ENCODE measurements at regions of chr9 and their contacts with region 1.

Region 1: DNA sequence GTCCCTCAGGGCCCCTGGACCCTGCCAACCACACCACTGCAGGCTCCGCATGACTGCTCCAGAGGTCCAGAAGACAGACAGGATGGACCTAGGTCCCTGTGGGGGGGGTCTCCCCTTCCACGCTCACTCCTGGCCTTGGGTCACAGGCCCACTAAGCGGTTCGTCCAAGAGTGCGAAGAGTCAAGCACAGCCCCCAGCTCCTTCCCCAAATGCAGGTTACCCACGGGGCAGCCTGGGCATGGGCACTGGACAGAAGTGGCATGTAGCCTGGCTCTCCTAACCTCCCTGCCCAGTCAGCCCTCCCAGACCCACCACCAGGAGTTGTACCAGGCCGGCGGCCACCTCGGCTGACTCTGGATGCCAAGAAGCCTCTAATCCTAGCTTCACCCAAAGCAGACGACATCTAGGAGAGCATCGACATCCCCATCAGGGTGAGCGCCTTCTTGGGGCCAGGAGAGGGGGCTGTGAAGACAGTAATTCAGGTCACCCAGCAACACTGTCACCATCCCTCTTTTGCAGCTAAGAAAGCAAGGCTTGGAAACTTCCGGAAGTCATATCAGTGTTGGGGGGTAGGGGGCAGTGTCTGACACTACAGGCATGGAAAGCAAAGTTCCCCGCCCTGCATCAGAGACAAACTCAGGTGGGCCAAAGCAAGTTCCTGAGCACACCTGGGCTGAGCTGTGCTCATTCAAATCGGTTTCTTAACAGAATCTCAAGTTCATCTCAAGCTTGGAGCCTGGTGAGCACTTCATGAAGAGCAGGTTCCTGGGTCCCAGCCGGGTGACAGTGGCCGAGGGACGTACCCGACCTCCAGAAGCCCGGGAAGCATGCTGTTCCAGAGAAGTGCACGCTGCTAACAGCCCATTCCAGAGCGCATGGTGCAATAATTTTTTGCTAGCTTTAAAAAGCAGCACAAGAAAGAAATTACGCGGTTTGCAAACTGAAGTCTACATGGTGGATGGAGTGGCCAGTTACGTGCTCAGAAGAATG is 68.7 kb downstream of the SEMA4D start:
- DNase-seq: peak in 4 of 5 donors; percentile 51 to 79 (median 72)
- H3K4me3 ChIP-seq: no peak overlapping the region
- H3K4me3 Mint-ChIP-seq: peak overlapping the region; percentile 7 to 66 (median 50)
- H3K27ac ChIP-seq: no peak overlapping the region
- H3K27ac Mint-ChIP-seq: peak overlapping the region; percentile 64 to 96 (median 92)
- H3K4me1 ChIP-seq: peaks cover 94% of the 10 kb centered on the region
- H3K4me1 Mint-ChIP-seq: peaks cover 86 to 100% (median 94%) of the 10 kb centered on the region in 3 donors
- H3K27me3 ChIP-seq: no peaks in the 10 kb centered on the region
- H3K27me3 Mint-ChIP-seq: peaks cover 0 to 1% of the 10 kb centered on the region in 2 donors

Region 2: GRCh38 chr9:89410641-89411350 is 18.4 kb before region 1 on chr9:
- CTCF ChIA-PET with region 1: interaction called, 25 read pairs
- POLR2A ChIA-PET with region 1: interaction called, 4 read pairs
- DNase-seq: no peak
- H3K4me3 ChIP-seq: no peak overlapping the region
- H3K4me3 Mint-ChIP-seq: peak overlapping the region; percentile 40 to 83 (median 62)
- H3K27ac ChIP-seq: no peak overlapping the region
- H3K27ac Mint-ChIP-seq: peak overlapping the region; percentile 56 to 96 (median 88)
- H3K4me1 ChIP-seq: peaks cover 90% of the 10 kb centered on the region
- H3K4me1 Mint-ChIP-seq: peaks cover 89 to 98% (median 98%) of the 10 kb centered on the region in 3 donors
- H3K27me3 ChIP-seq: no peaks in the 10 kb centered on the region
- H3K27me3 Mint-ChIP-seq: peaks cover 0 to 2% of the 10 kb centered on the region in 2 donors

Region 3: DNA sequence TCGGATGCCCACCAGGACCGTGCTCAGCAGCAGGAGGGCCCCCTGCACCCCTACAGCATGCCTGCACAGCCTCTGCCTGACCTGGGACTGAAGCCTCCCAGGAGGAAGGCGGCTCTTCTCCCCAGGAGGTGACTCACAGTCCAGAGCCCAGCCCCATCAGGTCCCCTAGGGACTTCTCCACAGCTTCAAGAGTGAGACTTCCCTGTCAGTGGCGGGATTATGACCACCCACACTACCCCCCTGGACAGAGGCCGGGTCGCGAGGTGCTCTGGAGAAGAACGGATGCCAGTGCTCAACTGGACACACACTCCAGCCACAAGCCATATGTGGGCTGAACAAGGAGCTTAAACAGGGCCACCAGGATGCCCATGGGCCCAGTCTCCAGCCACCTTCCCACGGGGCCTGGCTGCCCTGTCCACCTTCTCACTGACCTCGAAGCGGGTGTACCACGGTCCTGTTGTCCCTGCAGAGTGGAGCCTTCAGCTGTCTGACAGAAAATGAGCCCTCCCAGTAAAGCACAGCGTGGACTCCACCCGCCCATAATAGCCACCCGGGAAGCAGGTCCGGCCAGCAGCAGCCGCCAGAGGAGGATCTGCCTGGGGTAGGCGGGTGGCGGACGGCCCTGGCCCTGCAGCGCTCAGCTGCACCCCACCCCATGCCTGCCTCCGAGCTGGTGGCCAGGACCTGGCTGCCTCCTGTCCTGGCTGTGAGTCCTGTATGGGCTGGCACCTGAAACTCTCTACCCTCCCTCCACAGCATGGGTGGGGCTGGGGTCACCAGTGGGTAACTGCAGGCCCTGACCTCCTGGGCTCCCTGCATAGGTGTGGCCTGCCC is 14.0 kb after region 1 on chr9:
- CTCF ChIA-PET with region 1: interaction called, 30 read pairs
- POLR2A ChIA-PET with region 1: interaction called, 4 read pairs
- DNase-seq: no peak
- H3K4me3 ChIP-seq: no peak overlapping the region
- H3K4me3 Mint-ChIP-seq: peak overlapping the region in 2 of 7 donors; percentile 19 to 63
- H3K27ac ChIP-seq: peak overlapping the region; percentile 44
- H3K27ac Mint-ChIP-seq: peak overlapping the region; percentile 71 to 98 (median 94)
- H3K4me1 ChIP-seq: peaks cover 98% of the 10 kb centered on the region
- H3K4me1 Mint-ChIP-seq: peaks cover 85 to 95% (median 93%) of the 10 kb centered on the region in 3 donors
- H3K27me3 ChIP-seq: no peaks in the 10 kb centered on the region
- H3K27me3 Mint-ChIP-seq: peaks cover 0 to 2% of the 10 kb centered on the region in 2 donors

Region 4: DNA sequence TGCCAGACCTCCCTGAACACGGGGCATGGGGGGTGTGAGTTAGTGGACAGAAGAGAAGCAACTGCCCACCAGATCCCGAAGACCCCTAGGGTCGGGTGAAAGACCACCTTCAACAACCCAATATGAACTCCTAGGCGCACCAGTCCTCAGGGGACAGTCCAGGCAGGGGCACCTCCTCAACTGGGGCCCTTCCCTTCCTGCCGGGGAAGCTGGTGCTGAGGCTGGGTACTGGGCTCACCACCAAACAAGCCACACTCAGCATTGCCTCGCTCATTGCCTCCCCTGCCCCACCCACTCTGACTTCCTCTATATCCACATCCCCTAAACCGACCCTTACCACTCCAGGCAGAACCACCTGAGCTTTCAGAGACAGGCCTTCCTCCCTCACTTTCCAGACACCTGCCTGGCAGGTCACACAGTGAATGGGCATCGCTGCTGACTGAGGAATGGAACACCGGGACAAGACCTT is 26.2 kb after region 1 on chr9:
- CTCF ChIA-PET with region 1: interaction called, 15 read pairs
- POLR2A ChIA-PET with region 1: interaction called, 3 read pairs
- DNase-seq: peak in 2 of 5 donors; percentile 68 to 69
- H3K4me3 ChIP-seq: peak overlapping the region; percentile 38
- H3K4me3 Mint-ChIP-seq: peak overlapping the region; percentile 34 to 88 (median 78)
- H3K27ac ChIP-seq: peak overlapping the region; percentile 26
- H3K27ac Mint-ChIP-seq: peak overlapping the region; percentile 93 to 99 (median 97)
- H3K4me1 ChIP-seq: peaks cover 89% of the 10 kb centered on the region
- H3K4me1 Mint-ChIP-seq: peaks cover 85 to 95% (median 92%) of the 10 kb centered on the region in 3 donors
- H3K27me3 ChIP-seq: no peaks in the 10 kb centered on the region
- H3K27me3 Mint-ChIP-seq: no peaks in the 10 kb centered on the region

Region 5: DNA sequence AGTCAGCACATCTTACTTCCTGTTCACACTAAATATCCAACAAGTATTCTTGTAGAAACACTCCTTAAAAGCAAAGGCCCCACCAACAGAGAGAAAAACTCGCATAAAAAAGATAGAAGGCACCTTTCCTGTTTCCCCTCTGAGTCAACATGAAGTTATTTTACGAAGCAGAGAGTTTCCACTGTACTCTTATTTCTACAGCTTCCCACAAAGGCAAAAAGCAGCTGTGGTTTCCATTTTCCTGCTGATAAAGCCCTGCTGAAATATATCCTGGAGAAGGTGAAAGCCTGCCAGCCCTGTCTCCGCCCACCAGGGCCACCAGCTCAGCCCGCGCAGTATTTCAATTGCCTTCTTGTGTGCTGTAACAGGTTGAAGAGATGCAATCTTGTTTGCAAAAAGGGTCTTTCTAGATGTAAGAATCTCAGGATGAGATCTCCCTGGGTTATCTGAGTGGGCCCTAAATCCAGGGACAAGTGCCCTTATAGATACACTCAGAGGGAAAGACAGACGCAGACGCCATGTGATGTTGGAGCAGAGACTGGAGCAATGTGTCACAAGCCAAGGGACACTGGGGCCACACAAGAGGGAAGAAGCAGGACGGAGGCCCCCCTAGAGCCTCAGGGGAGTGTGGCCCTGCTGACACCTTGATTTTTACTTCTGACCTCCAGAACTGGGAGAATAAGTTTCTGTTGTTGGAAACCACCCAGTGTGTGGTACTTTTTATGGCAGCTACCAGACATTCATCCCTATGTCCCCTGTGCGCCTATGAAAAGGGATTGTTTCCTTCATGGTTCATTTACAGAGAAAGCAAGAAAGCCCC is 48.8 kb after region 1 on chr9:
- CTCF ChIA-PET with region 1: interaction called, 14 read pairs
- POLR2A ChIA-PET with region 1: interaction called, 3 read pairs
- DNase-seq: peak in 3 of 5 donors; percentile 33 to 72 (median 67)
- H3K4me3 ChIP-seq: peak overlapping the region; percentile 62
- H3K4me3 Mint-ChIP-seq: peak overlapping the region; percentile 85 to 98 (median 95)
- H3K27ac ChIP-seq: no peak overlapping the region
- H3K27ac Mint-ChIP-seq: peak overlapping the region; percentile 90 to 99 (median 96)
- H3K4me1 ChIP-seq: peaks cover 86% of the 10 kb centered on the region
- H3K4me1 Mint-ChIP-seq: peaks cover 88 to 96% (median 90%) of the 10 kb centered on the region in 3 donors
- H3K27me3 ChIP-seq: no peaks in the 10 kb centered on the region
- H3K27me3 Mint-ChIP-seq: no peaks in the 10 kb centered on the region

Measured in CD8-positive, alpha-beta memory T cell (primary cell).